Activated CD4-positive, alpha-beta memory T cell treated with anti-CD3 and anti-CD28 coated beads for 36 hours (primary cell): ENCODE measurements at regions of chr19 and their contacts with region 1.

Region 1: DNA sequence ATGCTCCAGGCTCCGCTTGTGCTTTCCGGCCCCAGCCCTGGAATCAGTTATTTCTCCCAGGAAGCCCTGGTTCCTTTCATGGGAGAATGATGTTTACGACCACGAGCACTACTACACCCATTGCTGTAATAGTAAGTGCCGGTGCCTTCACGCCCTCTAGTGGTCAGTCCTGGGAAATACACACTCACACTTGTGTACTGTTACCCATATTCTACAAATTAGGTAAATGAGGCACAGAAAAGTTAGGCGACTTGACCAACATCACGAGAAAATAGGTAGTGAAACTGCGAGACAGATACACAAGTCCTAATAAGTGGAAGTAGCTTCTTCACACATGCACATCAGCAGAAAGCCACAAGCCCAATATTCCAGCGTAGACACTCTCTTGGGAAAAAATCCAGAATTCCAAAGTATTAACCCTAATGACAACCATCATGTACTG is 21.7 kb downstream of the CEACAM21 start:
- DNase-seq: peak; percentile 80
- H3K4me3 Mint-ChIP-seq: peak overlapping the region; percentile 42
- H3K27ac Mint-ChIP-seq: no peak overlapping the region
- H3K4me1 Mint-ChIP-seq: peaks cover 12% of the 10 kb centered on the region
- H3K27me3 Mint-ChIP-seq: peaks cover 16% of the 10 kb centered on the region

Region 2: GRCh38 chr19:41206926-41207750 is 390.5 kb before region 1 on chr19:
- CTCF ChIA-PET with region 1: interaction called, 3 read pairs
- POLR2A ChIA-PET with region 1: no interaction called
- intact Hi-C with region 1: loop called (anchors 10 kb)
- DNase-seq: no peak
- H3K4me3 Mint-ChIP-seq: no peak overlapping the region
- H3K27ac Mint-ChIP-seq: no peak overlapping the region
- H3K4me1 Mint-ChIP-seq: peaks cover 11% of the 10 kb centered on the region
- H3K27me3 Mint-ChIP-seq: peaks cover 2% of the 10 kb centered on the region

Region 3: DNA sequence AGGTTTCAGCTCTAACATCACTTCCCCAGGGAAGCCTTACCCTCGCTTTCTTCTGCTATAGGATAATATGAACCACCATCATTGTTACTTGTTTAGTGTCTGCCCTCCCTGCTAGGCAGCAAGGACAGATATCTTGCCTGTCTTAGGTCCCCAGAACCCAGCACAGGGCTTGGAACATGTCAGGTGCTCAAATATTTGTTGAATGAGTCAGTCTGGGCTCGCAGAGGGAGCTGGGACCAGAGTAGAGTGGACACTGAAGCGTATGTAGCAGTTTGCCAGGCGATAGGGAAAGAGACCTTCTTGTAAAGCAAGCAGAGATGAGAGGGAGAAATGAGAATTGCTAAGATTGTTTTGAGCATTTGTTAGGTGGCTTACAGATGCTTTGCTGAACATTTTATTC is 188.3 kb before region 1 on chr19:
- CTCF ChIA-PET with region 1: interaction called, 12 read pairs
- POLR2A ChIA-PET with region 1: no interaction called
- intact Hi-C with region 1: no loop called
- DNase-seq: no peak
- H3K4me3 Mint-ChIP-seq: no peak overlapping the region
- H3K27ac Mint-ChIP-seq: no peak overlapping the region
- H3K4me1 Mint-ChIP-seq: peaks cover 7% of the 10 kb centered on the region
- H3K27me3 Mint-ChIP-seq: no peaks in the 10 kb centered on the region

Region 4: DNA sequence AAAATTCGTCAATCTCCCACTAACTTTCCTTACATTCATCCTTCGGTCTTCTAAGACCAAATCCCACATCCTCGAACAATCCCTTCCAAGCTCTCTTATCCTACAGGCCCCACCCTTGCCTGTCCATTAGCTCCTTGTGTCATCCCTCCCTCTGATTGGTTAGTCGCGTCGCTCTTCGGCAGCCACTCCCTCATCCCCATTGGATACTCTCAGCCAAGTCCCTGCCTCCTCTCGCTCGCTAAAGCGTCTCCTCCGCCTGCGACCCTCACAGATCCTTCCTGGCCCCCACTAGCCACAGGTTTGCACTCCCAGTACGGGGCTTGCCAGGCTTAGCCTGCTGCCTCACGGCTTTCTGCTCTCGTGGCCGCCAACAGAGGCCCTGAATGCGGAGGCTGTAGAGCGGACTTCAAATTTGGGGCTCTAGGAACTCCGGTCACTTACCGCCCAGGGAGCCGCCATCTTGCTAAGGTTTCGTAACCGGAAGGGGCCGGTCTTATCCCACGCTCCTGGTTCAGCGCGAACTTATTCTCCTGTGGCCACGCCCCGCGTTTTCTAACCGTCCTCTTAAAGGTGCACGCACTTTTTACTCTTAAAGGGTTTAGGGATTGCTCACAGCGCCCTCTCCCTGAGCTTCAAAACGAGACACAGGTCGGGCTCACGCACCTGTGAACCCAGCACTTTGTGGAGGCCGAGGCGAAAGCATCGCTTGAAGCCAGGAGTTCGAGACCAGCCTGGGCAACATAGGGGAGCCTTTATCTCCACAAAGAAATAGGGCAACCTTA is 158.0 kb before region 1 on chr19 and contains the start of gene DMAC2:
- CTCF ChIA-PET with region 1: interaction called, 19 read pairs
- POLR2A ChIA-PET with region 1: no interaction called
- intact Hi-C with region 1: no loop called
- DNase-seq: peak; percentile 98
- H3K4me3 Mint-ChIP-seq: no peak within 1 kb of the TSS
- H3K27ac Mint-ChIP-seq: no peak within 1 kb of the TSS
- H3K4me1 Mint-ChIP-seq: peaks cover 15% of the 10 kb centered on the region
- H3K27me3 Mint-ChIP-seq: no peaks in the 10 kb centered on the region
- total RNA-seq, gene DMAC2: 47.5 to 47.8 TPM

Region 5: GRCh38 chr19:41449079-41449864 is 148.3 kb before region 1 on chr19:
- CTCF ChIA-PET with region 1: interaction called, 92 read pairs
- POLR2A ChIA-PET with region 1: no interaction called
- intact Hi-C with region 1: loop called (anchors 1 kb)
- DNase-seq: peak; percentile 84
- H3K4me3 Mint-ChIP-seq: peak overlapping the region; percentile 62
- H3K27ac Mint-ChIP-seq: no peak overlapping the region
- H3K4me1 Mint-ChIP-seq: peaks cover 7% of the 10 kb centered on the region
- H3K27me3 Mint-ChIP-seq: peaks cover 9% of the 10 kb centered on the region

Region 6: GRCh38 chr19:41521931-41522555 is 75.6 kb before region 1 on chr19:
- CTCF ChIA-PET with region 1: no interaction called
- POLR2A ChIA-PET with region 1: no interaction called
- intact Hi-C with region 1: loop called (anchors 2 kb)
- DNase-seq: peak; percentile 49
- H3K4me3 Mint-ChIP-seq: peak overlapping the region; percentile 67
- H3K27ac Mint-ChIP-seq: peak overlapping the region; percentile 67
- H3K4me1 Mint-ChIP-seq: peaks cover 25% of the 10 kb centered on the region
- H3K27me3 Mint-ChIP-seq: peaks cover 9% of the 10 kb centered on the region

Region 7: GRCh38 chr19:41563854-41564514 is 33.6 kb before region 1 on chr19:
- CTCF ChIA-PET with region 1: interaction called, 49 read pairs
- POLR2A ChIA-PET with region 1: no interaction called
- intact Hi-C with region 1: loop called (anchors 2 kb)
- DNase-seq: peak; percentile 74
- H3K4me3 Mint-ChIP-seq: peak overlapping the region; percentile 62
- H3K27ac Mint-ChIP-seq: peak overlapping the region; percentile 38
- H3K4me1 Mint-ChIP-seq: peaks cover 72% of the 10 kb centered on the region
- H3K27me3 Mint-ChIP-seq: no peaks in the 10 kb centered on the region

Region 8: GRCh38 chr19:41671491-41671890 is 73.9 kb after region 1 on chr19:
- CTCF ChIA-PET with region 1: no interaction called
- POLR2A ChIA-PET with region 1: no interaction called
- intact Hi-C with region 1: no loop called
- DNase-seq: no peak
- H3K4me3 Mint-ChIP-seq: no peak overlapping the region
- H3K27ac Mint-ChIP-seq: no peak overlapping the region
- H3K4me1 Mint-ChIP-seq: no peaks in the 10 kb centered on the region
- H3K27me3 Mint-ChIP-seq: peaks cover 40% of the 10 kb centered on the region

Region 9: DNA sequence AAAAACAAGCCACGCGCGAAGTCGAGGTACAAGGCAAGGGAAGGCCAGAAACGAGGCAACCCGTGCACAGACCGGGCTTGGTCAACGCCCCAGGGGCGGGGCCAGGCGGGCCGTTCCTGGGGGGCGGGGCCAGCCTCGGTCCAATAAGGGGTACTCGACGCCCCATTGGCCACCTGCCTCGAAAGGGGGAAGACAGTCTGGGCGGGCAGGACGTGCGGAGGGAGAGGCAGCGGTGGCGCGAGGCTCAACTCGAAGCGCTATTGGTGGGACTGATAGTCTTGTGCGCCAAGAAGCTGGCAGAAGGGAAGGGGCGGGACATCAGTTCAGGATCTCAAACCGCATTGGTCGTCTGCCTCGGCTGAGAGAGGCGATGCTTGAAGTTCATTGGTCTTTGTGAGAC is 247.0 kb after region 1 on chr19 and contains the start of gene LYPD4:
- CTCF ChIA-PET with region 1: no interaction called
- POLR2A ChIA-PET with region 1: no interaction called
- intact Hi-C with region 1: no loop called
- DNase-seq: no peak
- H3K4me3 Mint-ChIP-seq: no peak within 1 kb of the TSS
- H3K27ac Mint-ChIP-seq: no peak within 1 kb of the TSS
- H3K4me1 Mint-ChIP-seq: no peaks in the 10 kb centered on the region
- H3K27me3 Mint-ChIP-seq: no peaks in the 10 kb centered on the region
- total RNA-seq, gene LYPD4: not detected

Region 10: GRCh38 chr19:41928221-41928683 is 330.6 kb after region 1 on chr19 and contains the start of gene ERFL:
- CTCF ChIA-PET with region 1: no interaction called
- POLR2A ChIA-PET with region 1: no interaction called
- intact Hi-C with region 1: no loop called
- DNase-seq: no peak
- H3K4me3 Mint-ChIP-seq: peak within 1 kb of the TSS; percentile 80
- H3K27ac Mint-ChIP-seq: peak within 1 kb of the TSS; percentile 43
- H3K4me1 Mint-ChIP-seq: peaks cover 15% of the 10 kb centered on the region
- H3K27me3 Mint-ChIP-seq: no peaks in the 10 kb centered on the region
- total RNA-seq, gene ERFL: 1.3 to 2.0 TPM